IMR-90 (cell line): ENCODE measurements at regions of chr2 and their contacts with region 1.

Region 1: GRCh38 chr2:24409700-24410556 is 49.6 kb upstream of the ITSN2 start:
- DNase-seq: peak; percentile 74
- ATAC-seq: peak; percentile 91
- H3K4me3 ChIP-seq: no peak overlapping the region
- H3K27ac ChIP-seq: no peak overlapping the region
- H3K4me1 ChIP-seq: no peaks in the 10 kb centered on the region
- H3K27me3 ChIP-seq: peaks cover 2% of the 10 kb centered on the region
- CTCF ChIP-seq: peak; percentile 86
- POLR2A ChIP-seq: no peak
- RAD21 ChIP-seq: peak; percentile 86

Region 2: DNA sequence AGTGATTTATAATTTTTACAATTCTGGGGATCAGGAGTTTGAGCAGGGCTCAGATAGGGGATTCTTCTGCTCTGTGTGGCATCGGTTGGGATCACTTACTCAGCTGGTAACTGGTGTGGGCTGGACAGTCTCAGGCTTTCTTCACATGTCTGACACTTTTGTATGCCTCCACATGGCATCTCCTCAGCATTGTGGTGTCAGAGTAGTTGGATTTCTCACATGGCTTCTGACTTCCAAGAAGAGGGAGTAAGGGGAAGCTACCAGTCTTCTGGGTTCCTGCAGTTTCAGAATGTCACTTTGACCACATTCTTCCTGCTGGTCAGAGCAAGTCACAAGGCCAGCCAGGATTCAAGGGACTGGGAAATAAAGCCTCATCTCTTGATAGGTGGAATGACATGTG is 136.7 kb after region 1 on chr2:
- CTCF ChIA-PET with region 1: no interaction called
- POLR2A ChIA-PET with region 1: no interaction called
- dilution Hi-C with region 1: no loop called
- in situ Hi-C with region 1: no loop called
- intact Hi-C with region 1: no loop called
- DNase-seq: no peak
- ATAC-seq: no peak
- H3K4me3 ChIP-seq: no peak overlapping the region
- H3K27ac ChIP-seq: no peak overlapping the region
- H3K4me1 ChIP-seq: no peaks in the 10 kb centered on the region
- H3K27me3 ChIP-seq: no peaks in the 10 kb centered on the region
- CTCF ChIP-seq: no peak
- POLR2A ChIP-seq: no peak
- RAD21 ChIP-seq: no peak

Region 3: DNA sequence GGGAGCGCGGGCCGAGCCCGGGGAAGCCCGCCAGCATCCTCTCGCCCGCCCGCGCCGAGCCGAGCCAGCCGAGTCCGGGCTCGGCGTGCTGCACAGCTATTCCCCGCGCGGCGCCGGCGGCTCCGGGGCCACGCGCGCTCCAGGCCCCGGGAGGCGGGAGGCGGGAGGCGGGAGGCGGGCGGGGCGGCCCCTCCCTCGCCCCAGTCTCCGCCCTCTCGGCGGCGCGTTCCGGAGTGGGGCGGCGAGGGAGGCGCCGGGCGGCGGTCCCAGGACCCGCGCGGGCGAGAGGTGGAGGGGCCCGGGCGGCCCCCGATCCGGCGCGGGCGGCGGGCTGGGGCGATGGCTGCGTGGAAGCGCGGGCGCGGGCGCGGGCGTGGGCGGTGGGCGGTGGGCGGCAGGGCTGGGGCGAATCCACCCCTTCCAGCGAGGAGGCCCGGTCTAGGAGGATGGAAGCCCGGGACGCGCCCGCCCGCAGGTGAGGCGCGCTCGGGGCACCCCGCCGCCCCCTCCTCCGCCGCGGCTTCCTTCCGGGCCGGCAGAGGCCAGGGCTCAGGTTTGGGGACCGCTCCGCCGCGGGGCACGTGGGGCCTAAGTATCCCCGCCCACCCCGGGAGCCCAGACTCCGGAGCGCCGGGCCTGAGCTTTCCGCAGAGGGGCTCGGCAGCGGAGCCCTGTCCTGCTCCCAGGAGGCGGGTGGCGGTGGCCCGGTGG is 510.3 kb after region 1 on chr2 and contains the start of gene ADCY3:
- CTCF ChIA-PET with region 1: no interaction called
- POLR2A ChIA-PET with region 1: no interaction called
- dilution Hi-C with region 1: no loop called
- in situ Hi-C with region 1: no loop called
- intact Hi-C with region 1: loop called (anchors 5 kb)
- DNase-seq: peak; percentile 29
- ATAC-seq: peak; percentile 81
- H3K4me3 ChIP-seq: peak within 1 kb of the TSS; percentile 68
- H3K27ac ChIP-seq: peak within 1 kb of the TSS; percentile 21
- H3K4me1 ChIP-seq: peaks cover 22% of the 10 kb centered on the region; the same call in 1 of the 2 replicates
- H3K27me3 ChIP-seq: no peaks in the 10 kb centered on the region
- CTCF ChIP-seq: no peak
- POLR2A ChIP-seq: no peak
- RAD21 ChIP-seq: no peak
- total RNA-seq, gene ADCY3: 16.4 and 17.4 TPM in 2 replicates

Region 4: DNA sequence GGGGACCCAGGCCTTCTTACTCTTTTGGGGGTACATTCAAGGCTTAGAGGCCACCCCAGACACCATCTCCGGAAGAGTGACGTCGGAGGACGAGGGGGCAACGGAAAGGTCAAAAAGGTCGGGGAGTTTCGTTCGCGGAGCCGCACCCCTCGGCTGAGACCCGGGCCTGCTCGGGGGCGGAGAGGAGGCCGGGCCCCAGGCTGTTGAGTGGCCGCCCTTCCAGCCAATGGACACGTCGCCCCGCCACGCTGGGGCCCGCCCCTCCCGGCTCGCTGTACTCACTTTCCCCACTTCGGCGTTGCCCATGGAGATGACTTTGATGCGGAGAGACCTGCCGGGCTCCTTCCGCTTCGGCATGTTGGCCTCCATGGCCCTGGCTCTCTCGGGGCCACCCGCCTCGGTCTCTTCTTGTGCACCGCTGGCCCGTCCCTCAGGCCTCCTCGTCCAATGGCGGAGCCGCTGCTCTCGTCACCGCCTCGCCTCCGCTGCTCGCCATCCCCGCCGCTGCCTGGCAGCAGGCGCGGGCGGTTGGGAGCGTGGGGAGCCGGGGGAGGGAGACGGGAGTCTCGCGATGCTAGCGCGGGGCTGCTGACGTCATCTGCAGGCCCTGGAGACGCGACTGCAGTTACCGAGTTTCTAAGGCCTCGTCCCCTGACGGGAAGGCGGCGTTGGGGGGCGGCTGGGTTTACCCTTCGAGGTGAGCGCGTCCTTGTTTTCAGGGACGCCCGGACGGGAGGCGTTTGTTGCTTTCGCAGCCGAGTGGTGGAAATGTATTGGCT is 561.8 kb after region 1 on chr2 and contains the start of gene DNAJC27:
- CTCF ChIA-PET with region 1: no interaction called
- POLR2A ChIA-PET with region 1: no interaction called
- dilution Hi-C with region 1: no loop called
- in situ Hi-C with region 1: no loop called
- intact Hi-C with region 1: loop called (anchors 5 kb)
- DNase-seq: peak; percentile 98
- ATAC-seq: peak; percentile 97
- H3K4me3 ChIP-seq: peak within 1 kb of the TSS; percentile 72
- H3K27ac ChIP-seq: peak within 1 kb of the TSS; percentile 96
- H3K4me1 ChIP-seq: no peaks in the 10 kb centered on the region
- H3K27me3 ChIP-seq: no peaks in the 10 kb centered on the region
- CTCF ChIP-seq: no peak
- POLR2A ChIP-seq: peak; percentile 97
- RAD21 ChIP-seq: no peak
- total RNA-seq, gene DNAJC27: 2.0 and 2.8 TPM in 2 replicates